Prostate gland (tissue), 2 donors: ENCODE measurements at regions of chr6 and their contacts with region 1.

Region 1: DNA sequence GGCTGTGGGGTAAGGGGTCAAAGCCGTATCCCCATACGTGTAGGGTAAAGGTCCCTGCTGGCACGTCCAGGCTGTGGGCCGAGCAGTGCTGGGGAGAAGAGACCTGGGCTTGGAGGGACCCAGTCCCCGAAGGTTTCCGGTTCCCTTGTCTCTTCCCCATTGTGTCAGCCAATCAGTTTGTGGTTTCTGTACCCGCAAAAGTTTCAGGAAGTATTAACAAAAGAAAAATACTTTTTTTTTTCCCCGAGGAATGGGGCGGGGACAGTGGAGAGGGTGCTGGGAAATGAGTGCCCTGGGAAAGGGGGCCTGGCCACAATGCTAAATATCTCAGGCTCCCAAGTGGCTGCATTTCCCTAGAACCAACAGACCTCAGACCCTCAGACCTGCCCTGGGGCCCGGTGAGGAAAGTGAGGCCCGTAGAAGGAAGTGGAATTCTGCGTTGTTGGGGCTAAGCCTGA is 15.2 kb upstream of the AMD1 start:
- DNase-seq: no peak
- H3K4me3 ChIP-seq: no peak overlapping the region
- H3K27ac ChIP-seq: no peak overlapping the region
- H3K4me1 ChIP-seq: no peaks in the 10 kb centered on the region
- H3K27me3 ChIP-seq: no peaks in the 10 kb centered on the region
- CTCF ChIP-seq: no peak
- POLR2A ChIP-seq: no peak

Region 2: DNA sequence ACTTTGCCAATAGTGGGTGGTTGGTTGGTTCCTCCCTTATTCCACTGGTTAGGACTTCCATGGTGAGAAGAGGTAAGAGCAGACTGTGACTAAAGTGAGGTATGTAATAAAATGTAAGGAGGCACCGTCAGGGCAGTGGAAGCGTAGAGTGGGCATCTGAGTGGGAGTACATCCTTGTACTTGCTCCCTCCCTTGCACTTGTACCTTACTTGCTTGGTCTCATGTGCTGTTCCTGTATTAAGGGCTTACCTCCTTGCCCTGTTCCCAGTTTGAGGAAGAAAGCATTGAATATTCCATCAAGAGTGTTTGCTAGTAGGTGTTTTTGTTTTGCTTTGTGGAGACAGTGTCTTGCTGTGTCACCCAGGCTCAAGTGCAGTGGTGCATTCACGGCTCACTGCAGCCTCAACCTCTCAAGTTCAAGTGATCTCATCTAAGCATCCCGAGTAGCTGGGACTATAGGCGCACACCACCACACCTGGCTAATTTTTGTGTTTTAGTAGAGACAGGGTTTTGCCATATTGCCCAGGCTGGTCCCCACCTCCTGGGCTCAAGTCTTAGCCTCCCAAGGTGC is 40.7 kb after region 1 on chr6:
- intact Hi-C with region 1: loop called (anchors 10 kb)
- DNase-seq: no peak
- H3K4me3 ChIP-seq: no peak overlapping the region
- H3K27ac ChIP-seq: no peak overlapping the region
- H3K4me1 ChIP-seq: no peaks in the 10 kb centered on the region
- H3K27me3 ChIP-seq: no peaks in the 10 kb centered on the region
- CTCF ChIP-seq: no peak
- POLR2A ChIP-seq: no peak